Naive thymus-derived CD4-positive, alpha-beta T cell (primary cell): ENCODE measurements at regions of chr1 and their contacts with region 1.

Region 1: DNA sequence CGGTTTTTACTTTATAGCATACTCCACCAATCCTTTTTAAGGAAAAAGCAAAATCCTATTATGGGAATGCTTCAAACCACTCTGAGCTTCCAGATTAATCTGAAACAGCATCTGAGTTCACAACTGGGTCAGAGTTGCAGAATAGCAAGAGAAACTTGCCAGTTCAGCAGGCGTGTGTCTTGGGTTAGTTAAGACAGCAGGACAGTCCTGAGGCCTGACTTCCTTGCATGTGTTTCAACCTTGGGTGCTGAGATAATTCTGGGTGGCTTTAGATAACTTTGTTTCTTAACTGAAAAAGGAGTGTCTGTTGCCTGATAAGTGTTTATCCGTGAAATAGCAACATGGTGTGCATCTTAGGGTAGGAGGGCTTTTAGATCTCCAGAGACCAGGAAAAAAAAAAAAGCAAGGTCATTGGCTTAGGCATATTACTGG is 169.2 kb downstream of the DHRS3 start:
- DNase-seq: no peak
- ATAC-seq: no peak
- H3K4me3 ChIP-seq: peak overlapping the region; percentile 9
- H3K4me3 Mint-ChIP-seq: peak overlapping the region; percentile 78 to 94 (median 86)
- H3K27ac ChIP-seq: peak overlapping the region; percentile 59
- H3K27ac Mint-ChIP-seq: peak overlapping the region; percentile 76 to 98 (median 94)
- H3K4me1 ChIP-seq: peaks cover 29 to 74% of the 10 kb centered on the region in 2 donors
- H3K4me1 Mint-ChIP-seq: peaks cover 44 to 98% (median 86%) of the 10 kb centered on the region in 7 donors
- H3K27me3 ChIP-seq: no peaks in the 10 kb centered on the region
- H3K27me3 Mint-ChIP-seq: peaks cover 0 to 31% (median 0%) of the 10 kb centered on the region in 5 donors

Region 2: GRCh38 chr1:12356004-12356890 is 92.5 kb before region 1 on chr1:
- CTCF ChIA-PET with region 1: no interaction called
- POLR2A ChIA-PET with region 1: no interaction called
- intact Hi-C with region 1: no loop called
- DNase-seq: no peak
- ATAC-seq: no peak
- H3K4me3 ChIP-seq: no peak overlapping the region
- H3K4me3 Mint-ChIP-seq: no peak overlapping the region
- H3K27ac ChIP-seq: no peak overlapping the region
- H3K27ac Mint-ChIP-seq: peak overlapping the region in 2 of 9 donors; percentile 4 to 19
- H3K4me1 ChIP-seq: no peaks in the 10 kb centered on the region
- H3K4me1 Mint-ChIP-seq: peaks cover 0 to 19% (median 6%) of the 10 kb centered on the region in 7 donors
- H3K27me3 ChIP-seq: no peaks in the 10 kb centered on the region
- H3K27me3 Mint-ChIP-seq: no peaks in the 10 kb centered on the region

Region 3: GRCh38 chr1:12424087-12424529 is 24.7 kb before region 1 on chr1:
- CTCF ChIA-PET with region 1: no interaction called
- POLR2A ChIA-PET with region 1: no interaction called
- intact Hi-C with region 1: loop called in 1 of 2 experiments (anchors 2 kb)
- DNase-seq: no peak
- ATAC-seq: no peak
- H3K4me3 ChIP-seq: no peak overlapping the region
- H3K4me3 Mint-ChIP-seq: no peak overlapping the region
- H3K27ac ChIP-seq: no peak overlapping the region
- H3K27ac Mint-ChIP-seq: peak overlapping the region in 2 of 9 donors; percentile 43 to 57
- H3K4me1 ChIP-seq: peaks cover 0 to 4% of the 10 kb centered on the region in 2 donors
- H3K4me1 Mint-ChIP-seq: peaks cover 14 to 45% (median 31%) of the 10 kb centered on the region in 7 donors
- H3K27me3 ChIP-seq: no peaks in the 10 kb centered on the region
- H3K27me3 Mint-ChIP-seq: no peaks in the 10 kb centered on the region

Region 4: GRCh38 chr1:12472798-12473551 is 24.2 kb after region 1 on chr1:
- CTCF ChIA-PET with region 1: interaction called, 3 read pairs
- POLR2A ChIA-PET with region 1: interaction called, 212 read pairs
- intact Hi-C with region 1: loop called (anchors 1 kb)
- DNase-seq: peak in 8 of 9 donors; percentile 54 to 67 (median 60)
- ATAC-seq: peak; percentile 77
- H3K4me3 ChIP-seq: peak overlapping the region; percentile 11
- H3K4me3 Mint-ChIP-seq: peak overlapping the region; percentile 72 to 86 (median 78)
- H3K27ac ChIP-seq: peak overlapping the region; percentile 67
- H3K27ac Mint-ChIP-seq: peak overlapping the region; percentile 94 to 99 (median 96)
- H3K4me1 ChIP-seq: peaks cover 51 to 87% of the 10 kb centered on the region in 2 donors
- H3K4me1 Mint-ChIP-seq: peaks cover 53 to 96% (median 91%) of the 10 kb centered on the region in 7 donors
- H3K27me3 ChIP-seq: no peaks in the 10 kb centered on the region
- H3K27me3 Mint-ChIP-seq: no peaks in the 10 kb centered on the region

Region 5: GRCh38 chr1:12511516-12512468 is 63.0 kb after region 1 on chr1:
- CTCF ChIA-PET with region 1: interaction called, 5 read pairs
- POLR2A ChIA-PET with region 1: interaction called, 11 read pairs
- intact Hi-C with region 1: loop called (anchors 1 kb)
- DNase-seq: no peak
- ATAC-seq: no peak
- H3K4me3 ChIP-seq: peak overlapping the region; percentile 69
- H3K4me3 Mint-ChIP-seq: peak overlapping the region; percentile 79 to 97 (median 88)
- H3K27ac ChIP-seq: peak overlapping the region; percentile 75
- H3K27ac Mint-ChIP-seq: peak overlapping the region; percentile 94 to 100 (median 98)
- H3K4me1 ChIP-seq: peaks cover 26% of the 10 kb centered on the region in 2 donors
- H3K4me1 Mint-ChIP-seq: peaks cover 30 to 72% (median 59%) of the 10 kb centered on the region in 7 donors
- H3K27me3 ChIP-seq: no peaks in the 10 kb centered on the region
- H3K27me3 Mint-ChIP-seq: no peaks in the 10 kb centered on the region